GM10248 (cell line): ENCODE measurements at regions of chr11 and their contacts with region 1.

Region 1: DNA sequence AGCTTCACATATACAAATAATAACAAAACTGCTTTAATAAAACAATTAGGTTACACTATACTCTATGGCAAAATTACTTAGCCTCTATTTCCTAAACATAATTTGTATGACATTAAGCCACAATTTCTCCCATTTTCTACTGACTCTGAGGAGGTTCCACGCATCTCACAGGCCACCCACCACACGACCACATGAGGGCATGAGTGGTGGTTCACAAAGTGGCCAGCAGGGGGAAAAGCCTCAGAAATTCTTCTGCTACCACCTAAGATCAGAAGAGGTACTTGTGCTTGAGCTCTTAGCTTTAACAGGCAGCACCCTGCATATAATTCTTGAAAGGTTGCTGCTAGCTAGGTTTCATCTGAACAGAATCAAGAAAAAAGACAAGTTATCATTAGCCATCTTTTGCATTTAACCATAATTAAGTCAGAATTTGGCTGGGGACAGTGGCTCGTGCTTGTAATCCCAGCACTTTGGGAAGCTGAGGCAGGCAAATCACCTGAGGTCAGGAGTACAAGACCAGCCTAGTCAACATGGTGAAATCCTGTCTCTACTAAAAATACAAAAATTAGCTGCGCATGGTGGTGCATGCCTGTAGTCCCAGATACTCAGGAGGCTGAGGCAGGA is 7.7 kb downstream of the LPXN start:
- DNase-seq: peak; percentile 45
- CTCF ChIP-seq: peak; percentile 64

Region 2: GRCh38 chr11:58485961-58486360 is 82.0 kb before region 1 on chr11:
- CTCF ChIA-PET with region 1: no interaction called
- POLR2A ChIA-PET with region 1: no interaction called
- DNase-seq: no peak
- CTCF ChIP-seq: no peak

Region 3: DNA sequence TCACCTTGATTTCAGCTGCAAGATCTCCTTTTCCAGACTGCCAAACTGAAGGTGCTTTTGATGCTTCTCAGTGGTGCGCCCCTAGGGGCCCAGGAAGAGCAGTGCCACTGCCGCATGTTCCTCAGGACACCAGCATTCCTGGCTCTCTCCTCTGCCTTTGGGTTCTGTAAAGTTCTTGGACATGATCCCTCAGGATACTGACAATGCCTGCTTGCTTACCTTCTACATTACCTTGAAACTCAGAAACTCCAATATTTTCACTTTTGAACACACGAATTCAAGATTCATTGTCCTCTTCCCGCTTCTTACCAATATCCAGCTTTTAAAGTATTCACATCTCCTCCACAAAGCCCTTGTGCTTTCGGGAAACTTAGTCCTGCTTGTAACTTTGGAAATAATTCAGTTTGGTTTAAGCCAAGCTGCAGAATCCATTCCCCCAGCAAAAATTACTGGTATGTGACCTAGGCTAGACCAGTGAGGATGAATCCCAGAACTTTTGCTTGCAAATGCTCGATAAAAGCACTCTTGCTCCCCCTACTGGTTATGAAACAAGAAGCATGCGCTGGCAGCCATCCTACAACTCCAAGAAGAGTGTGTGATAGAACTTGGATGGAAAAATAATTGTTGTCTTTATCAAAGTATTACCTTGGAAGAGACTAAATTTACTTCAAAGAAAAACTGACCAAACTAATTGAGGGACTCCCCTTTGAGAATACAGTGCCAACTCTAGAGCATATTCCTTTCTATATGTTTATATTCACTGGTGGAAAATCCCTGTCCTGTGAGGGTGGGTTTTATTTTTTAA is 43.6 kb before region 1 on chr11:
- CTCF ChIA-PET with region 1: interaction called, 18 read pairs
- POLR2A ChIA-PET with region 1: no interaction called
- DNase-seq: peak; percentile 24
- CTCF ChIP-seq: peak; percentile 67

Region 4: GRCh38 chr11:58549644-58550043 is 18.4 kb before region 1 on chr11:
- CTCF ChIA-PET with region 1: interaction called, 47 read pairs
- POLR2A ChIA-PET with region 1: no interaction called
- DNase-seq: no peak
- CTCF ChIP-seq: no peak

Region 5: DNA sequence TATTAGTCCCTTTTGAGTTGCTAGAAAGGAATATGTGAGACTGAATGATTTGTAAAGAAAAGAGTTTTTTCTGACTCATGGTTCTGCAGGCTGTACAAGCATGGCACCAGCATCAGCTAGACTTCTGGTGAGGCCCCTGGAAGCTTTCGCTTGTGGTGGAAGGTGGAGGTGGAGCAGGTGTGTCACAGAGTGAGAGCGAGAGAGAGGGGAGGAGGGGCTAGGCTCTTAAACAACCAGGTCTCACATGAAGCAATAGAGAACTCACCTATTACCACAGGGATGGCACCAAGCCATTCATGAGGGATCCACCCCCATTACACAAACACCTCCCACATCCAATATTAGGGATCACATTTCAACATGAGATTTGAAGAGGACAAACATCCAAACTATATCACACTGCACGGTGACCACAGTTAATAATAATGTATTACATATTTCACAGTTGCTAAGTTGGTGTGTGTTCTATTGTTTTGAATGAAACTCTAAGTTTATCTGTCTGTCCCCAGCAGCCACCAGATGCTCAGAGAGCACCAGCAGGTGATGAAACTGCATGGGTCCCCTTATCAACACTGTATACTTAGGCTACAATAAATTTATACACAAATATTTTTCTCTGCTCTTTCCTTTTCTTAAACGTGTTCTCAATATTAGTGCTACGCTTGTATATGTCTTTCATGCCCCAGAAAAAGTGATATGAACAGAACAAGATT is 24.9 kb after region 1 on chr11:
- CTCF ChIA-PET with region 1: interaction called, 10 read pairs
- POLR2A ChIA-PET with region 1: no interaction called
- DNase-seq: no peak
- CTCF ChIP-seq: no peak

Region 6: GRCh38 chr11:58675334-58676155 is 107.5 kb after region 1 on chr11:
- CTCF ChIA-PET with region 1: interaction called, 10 read pairs
- POLR2A ChIA-PET with region 1: no interaction called
- DNase-seq: peak; percentile 80
- CTCF ChIP-seq: peak; percentile 95